Ascending aorta (tissue), 2 donors: ENCODE measurements at regions of chr5 and their contacts with region 1.

Region 1: GRCh38 chr5:122182491-122182921 is 53.2 kb downstream of the ZNF474 start:
- DNase-seq: peak in 1 of 2 donors; percentile 77
- H3K4me3 ChIP-seq: peak overlapping the region in 1 of 2 donors; percentile 41
- H3K27ac ChIP-seq: peak overlapping the region; percentile 72 to 81
- H3K4me1 ChIP-seq: peaks cover 11 to 36% of the 10 kb centered on the region in 2 donors
- H3K27me3 ChIP-seq: no peaks in the 10 kb centered on the region
- CTCF ChIP-seq: no peak

Region 2: DNA sequence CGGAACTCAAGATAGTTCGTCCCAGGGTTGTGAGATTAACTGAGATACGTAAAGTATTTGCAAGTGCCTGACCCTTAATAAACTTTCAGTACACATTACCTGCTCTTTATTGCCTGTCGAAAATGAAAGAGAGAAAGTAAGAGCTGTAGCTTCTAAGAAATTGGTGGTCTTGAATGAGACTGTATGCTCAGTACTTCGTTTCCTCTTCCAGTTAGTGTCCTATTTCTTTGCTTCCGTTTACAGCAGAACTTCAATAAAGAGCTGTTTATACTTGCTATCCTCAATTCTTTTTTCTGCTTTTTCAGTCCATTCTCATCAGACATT is 220.2 kb before region 1 on chr5:
- intact Hi-C with region 1: loop called (anchors 5 kb)
- DNase-seq: no peak
- H3K4me3 ChIP-seq: peak overlapping the region; percentile 87 to 91
- H3K27ac ChIP-seq: peak overlapping the region; percentile 71 to 73
- H3K4me1 ChIP-seq: peaks cover 0 to 10% of the 10 kb centered on the region in 2 donors
- H3K27me3 ChIP-seq: no peaks in the 10 kb centered on the region
- CTCF ChIP-seq: no peak

Region 3: DNA sequence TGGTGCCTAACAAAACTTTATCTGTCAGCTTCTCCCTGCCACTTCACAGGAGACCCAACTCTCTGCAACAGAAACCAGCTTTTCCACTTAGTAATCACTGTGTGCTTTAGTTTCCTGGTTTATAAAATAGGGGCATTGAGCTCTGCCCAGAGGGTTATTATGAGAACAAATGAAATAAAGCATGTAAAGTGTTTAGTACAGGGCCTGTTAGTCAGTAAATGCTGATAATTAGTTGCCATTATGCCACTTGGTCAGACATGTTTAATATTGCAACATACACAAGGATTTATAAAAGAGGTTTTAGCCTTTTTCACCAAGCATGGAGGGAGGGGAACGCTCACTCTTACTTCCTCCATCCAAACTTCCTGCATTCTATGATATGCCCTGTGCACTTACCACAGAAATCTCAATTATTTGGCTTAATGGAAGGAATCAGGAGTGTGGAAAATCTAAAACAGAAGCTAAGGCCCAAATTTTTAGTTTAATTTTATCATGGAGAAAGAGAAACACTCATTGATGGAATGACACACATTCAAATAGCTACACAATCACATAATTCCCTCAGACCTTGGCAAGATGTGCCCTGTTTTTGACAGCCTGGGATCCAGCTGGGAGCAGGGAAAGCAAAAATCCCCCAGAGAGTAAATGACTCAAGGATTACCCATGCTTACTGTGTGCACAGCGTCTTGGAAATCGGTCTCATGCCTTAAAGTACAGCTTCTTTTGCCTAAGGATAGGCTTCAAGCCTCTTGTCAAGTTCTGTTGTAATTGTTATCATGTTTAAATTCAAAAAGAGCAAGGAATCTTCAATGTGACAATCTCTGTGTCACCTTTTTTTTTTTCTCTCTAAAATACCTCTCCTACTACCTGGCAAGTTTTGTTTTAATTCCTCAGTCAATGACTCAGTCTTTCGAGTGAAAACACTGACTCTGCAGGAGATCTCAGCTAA is 19.1 kb before region 1 on chr5:
- intact Hi-C with region 1: loop called (anchors 1 kb)
- DNase-seq: peak in 1 of 2 donors; percentile 87
- H3K4me3 ChIP-seq: no peak overlapping the region
- H3K27ac ChIP-seq: peak overlapping the region; percentile 54 to 66
- H3K4me1 ChIP-seq: peaks cover 0 to 13% of the 10 kb centered on the region in 2 donors
- H3K27me3 ChIP-seq: no peaks in the 10 kb centered on the region
- CTCF ChIP-seq: no peak